PC-3 (cell line): ENCODE measurements at regions of chr14 and their contacts with region 1.

Region 1: GRCh38 chr14:64503478-64504309 is at the start of gene ZBTB25:
- DNase-seq: peak; percentile 93
- ATAC-seq: peak; percentile 63
- H3K4me3 ChIP-seq: peak within 1 kb of the TSS; percentile 82
- H3K27ac ChIP-seq: peak within 1 kb of the TSS; percentile 89
- H3K4me1 ChIP-seq: peaks cover 43% of the 10 kb centered on the region
- H3K27me3 ChIP-seq: no peaks in the 10 kb centered on the region
- CTCF ChIP-seq: no peak
- total RNA-seq, gene ZBTB25: 4.0 and 10.7 TPM in 2 replicates

Region 2: DNA sequence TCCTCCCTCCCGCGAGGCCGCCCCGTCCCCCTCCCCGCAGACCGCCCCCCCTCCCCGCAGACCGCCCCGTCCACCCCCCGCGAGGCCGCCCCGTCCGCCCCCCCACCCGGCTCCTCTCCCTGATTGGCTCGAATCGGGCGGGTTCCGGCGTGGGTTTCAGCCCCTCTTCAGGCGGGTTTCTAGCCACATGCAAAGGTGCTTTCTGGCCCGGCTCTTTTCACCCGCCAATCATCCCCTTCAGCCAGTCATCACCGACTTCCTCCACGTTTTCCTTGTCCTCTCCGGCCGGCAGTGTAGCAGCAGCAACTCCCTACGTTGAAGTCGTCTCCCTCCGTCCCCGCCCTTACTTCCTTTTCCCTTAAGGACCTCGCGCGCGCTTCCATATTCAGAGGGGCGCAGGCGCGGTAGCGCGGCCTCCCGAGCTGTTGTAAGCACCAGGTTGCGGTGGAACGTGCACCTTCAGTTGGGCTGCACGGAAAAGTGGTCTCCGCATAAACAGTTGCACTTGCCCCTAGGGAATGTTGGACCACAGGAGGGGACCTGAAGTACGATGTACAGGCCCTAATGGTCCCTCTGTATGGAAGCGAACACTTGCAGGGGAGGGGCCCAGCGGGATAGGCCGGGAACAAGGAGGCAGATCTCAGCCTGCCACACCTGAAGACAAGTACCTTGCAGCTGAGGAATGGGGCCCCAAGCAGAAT is 164.9 kb before region 1 on chr14:
- CTCF ChIA-PET with region 1: no interaction called
- POLR2A ChIA-PET with region 1: no interaction called
- intact Hi-C with region 1: loop called (anchors 10 kb)
- DNase-seq: peak; percentile 98
- ATAC-seq: peak; percentile 90
- H3K4me3 ChIP-seq: peak overlapping the region; percentile 90
- H3K27ac ChIP-seq: peak overlapping the region; percentile 79
- H3K4me1 ChIP-seq: peaks cover 22% of the 10 kb centered on the region
- H3K27me3 ChIP-seq: no peaks in the 10 kb centered on the region
- CTCF ChIP-seq: no peak

Region 3: GRCh38 chr14:64444984-64445845 is 58.5 kb before region 1 on chr14:
- CTCF ChIA-PET with region 1: no interaction called
- POLR2A ChIA-PET with region 1: interaction called, 20 read pairs
- intact Hi-C with region 1: no loop called
- DNase-seq: no peak
- ATAC-seq: peak; percentile 38; the same call in 1 of the 2 replicates
- H3K4me3 ChIP-seq: no peak overlapping the region
- H3K27ac ChIP-seq: no peak overlapping the region
- H3K4me1 ChIP-seq: no peaks in the 10 kb centered on the region
- H3K27me3 ChIP-seq: no peaks in the 10 kb centered on the region
- CTCF ChIP-seq: no peak

Region 4: GRCh38 chr14:64540208-64541157 is 36.8 kb after region 1 on chr14 and contains the start of gene HSPA2:
- CTCF ChIA-PET with region 1: interaction called, 6 read pairs
- POLR2A ChIA-PET with region 1: no interaction called
- intact Hi-C with region 1: loop called (anchors 1 kb)
- DNase-seq: peak; percentile 100
- ATAC-seq: peak; percentile 88
- H3K4me3 ChIP-seq: peak within 1 kb of the TSS; percentile 68
- H3K27ac ChIP-seq: peak within 1 kb of the TSS; percentile 73
- H3K4me1 ChIP-seq: peaks cover 27% of the 10 kb centered on the region
- H3K27me3 ChIP-seq: no peaks in the 10 kb centered on the region
- CTCF ChIP-seq: peak; percentile 80
- total RNA-seq, gene HSPA2: 15.7 and 16.5 TPM in 2 replicates

Region 5: GRCh38 chr14:64628940-64629408 is 125.3 kb after region 1 on chr14:
- CTCF ChIA-PET with region 1: no interaction called
- POLR2A ChIA-PET with region 1: interaction called, 25 read pairs
- intact Hi-C with region 1: loop called (anchors 1 kb)
- DNase-seq: peak; percentile 92
- ATAC-seq: peak; percentile 98
- H3K4me3 ChIP-seq: no peak overlapping the region
- H3K27ac ChIP-seq: peak overlapping the region; percentile 84
- H3K4me1 ChIP-seq: peaks cover 20% of the 10 kb centered on the region
- H3K27me3 ChIP-seq: no peaks in the 10 kb centered on the region
- CTCF ChIP-seq: peak; percentile 25; the same call in 1 of the 2 replicates

Region 6: DNA sequence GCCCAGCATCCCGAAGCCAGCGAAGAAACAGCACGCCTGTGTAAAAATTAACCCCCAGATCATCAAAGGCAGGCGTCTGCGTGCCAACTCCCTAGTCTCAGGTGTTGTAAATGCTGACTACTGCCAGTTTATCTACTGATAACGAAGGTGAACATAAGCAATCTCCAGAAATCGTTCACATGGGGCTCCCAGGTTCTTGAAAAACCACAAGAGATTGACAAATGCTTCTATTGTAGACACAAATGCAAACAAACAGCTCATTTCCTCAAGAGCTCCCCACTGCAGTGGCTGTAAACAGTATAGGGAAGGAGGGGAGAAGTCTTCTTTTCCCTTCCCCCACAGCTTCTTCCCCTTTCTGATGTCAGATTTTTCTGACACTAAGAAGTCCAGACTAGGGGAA is 195.2 kb after region 1 on chr14:
- CTCF ChIA-PET with region 1: no interaction called
- POLR2A ChIA-PET with region 1: interaction called, 17 read pairs
- intact Hi-C with region 1: no loop called
- DNase-seq: peak; percentile 72
- ATAC-seq: peak; percentile 51
- H3K4me3 ChIP-seq: no peak overlapping the region
- H3K27ac ChIP-seq: no peak overlapping the region
- H3K4me1 ChIP-seq: peaks cover 41% of the 10 kb centered on the region
- H3K27me3 ChIP-seq: no peaks in the 10 kb centered on the region
- CTCF ChIP-seq: no peak

Region 7: DNA sequence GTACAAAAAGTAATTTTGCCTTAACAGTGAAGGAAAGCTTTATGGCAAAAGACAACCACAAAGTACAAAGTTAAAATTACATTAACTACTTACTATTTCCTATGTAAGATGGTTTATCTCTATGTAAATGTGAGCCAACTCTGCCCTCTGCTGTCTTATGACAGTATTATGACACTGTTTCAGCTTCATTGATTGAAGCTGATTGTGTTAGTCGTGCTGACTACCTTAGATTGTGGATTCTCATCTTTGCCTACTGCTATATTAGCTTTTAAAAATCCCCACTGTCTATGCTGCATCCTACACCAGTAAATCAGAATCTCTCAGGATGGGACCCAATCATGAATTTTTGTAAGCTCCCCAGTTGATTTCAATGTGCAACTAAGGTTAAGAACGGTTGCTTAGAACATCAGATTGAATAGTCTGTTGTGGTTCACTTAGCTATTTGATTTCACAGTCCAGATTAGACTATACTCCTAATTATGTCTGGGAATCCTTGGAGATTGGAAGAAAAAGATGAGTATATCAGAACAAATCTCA is 388.2 kb after region 1 on chr14:
- CTCF ChIA-PET with region 1: no interaction called
- POLR2A ChIA-PET with region 1: interaction called, 11 read pairs
- intact Hi-C with region 1: no loop called
- DNase-seq: peak; percentile 88
- ATAC-seq: peak; percentile 100
- H3K4me3 ChIP-seq: no peak overlapping the region
- H3K27ac ChIP-seq: no peak overlapping the region
- H3K4me1 ChIP-seq: no peaks in the 10 kb centered on the region
- H3K27me3 ChIP-seq: no peaks in the 10 kb centered on the region
- CTCF ChIP-seq: peak; percentile 85